ENCODE measurements at regions of chr10 and their contacts with region 1.

Region 1: GRCh38 chr10:90871766-90872647 is at the start of gene RPP30:
- DNase-seq: peak; percentile 82
- H3K4me3 Mint-ChIP-seq: peak within 1 kb of the TSS; percentile 97
- H3K27ac Mint-ChIP-seq: peak within 1 kb of the TSS; percentile 91
- H3K4me1 Mint-ChIP-seq: peaks cover 39% of the 10 kb centered on the region
- H3K27me3 Mint-ChIP-seq: peaks cover 29% of the 10 kb centered on the region
- total RNA-seq, gene RPP30: 78.3 and 80.4 TPM in 2 replicates

Region 2: DNA sequence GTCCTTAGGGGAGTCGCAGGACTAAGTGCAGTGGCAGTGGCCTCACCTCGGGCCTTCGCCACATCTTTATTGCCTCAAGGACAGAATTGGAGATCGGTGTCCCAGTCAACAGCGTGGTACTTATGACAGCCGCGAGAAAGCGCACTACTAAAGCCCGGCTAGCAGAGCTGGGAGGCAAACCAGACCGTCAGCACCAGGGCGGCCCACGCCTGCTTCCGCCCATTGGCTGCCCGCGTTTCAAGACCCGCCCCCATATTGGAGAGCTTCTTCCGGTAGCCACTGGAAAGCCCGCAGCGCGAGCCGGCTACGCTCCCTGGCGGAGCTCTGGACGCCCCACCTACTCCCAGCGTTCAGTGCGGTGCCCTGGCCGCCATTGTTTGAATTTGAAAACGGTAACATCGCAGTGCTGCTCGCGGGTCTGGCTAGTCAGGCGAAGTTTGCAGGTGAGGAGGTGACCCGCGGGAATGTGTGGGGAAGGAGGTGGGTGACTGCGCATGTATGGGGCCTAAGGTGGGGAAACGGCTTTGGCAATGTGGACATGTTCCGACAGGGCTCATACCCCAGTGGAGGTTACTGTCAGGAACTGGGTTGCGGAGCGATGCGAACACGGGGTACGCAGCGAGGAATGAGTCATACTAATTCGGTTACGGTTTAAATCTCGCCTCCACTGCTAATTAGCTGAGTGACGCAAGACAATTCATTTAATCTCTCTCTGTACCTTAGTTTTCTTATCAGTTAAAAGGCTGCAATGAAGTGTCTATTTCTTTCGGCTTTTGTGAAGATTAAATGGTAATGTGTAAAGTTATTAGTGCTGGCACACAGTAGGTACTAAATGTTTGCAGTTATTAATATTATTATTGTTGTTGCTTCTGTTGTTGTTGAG is 1170.5 kb before region 1 on chr10 and contains the start of gene KIF20B:
- intact Hi-C with region 1: loop called (anchors 2 kb)
- DNase-seq: peak; percentile 96
- H3K4me3 Mint-ChIP-seq: peak within 1 kb of the TSS; percentile 91
- H3K27ac Mint-ChIP-seq: peak within 1 kb of the TSS; percentile 95
- H3K4me1 Mint-ChIP-seq: peaks cover 63% of the 10 kb centered on the region
- H3K27me3 Mint-ChIP-seq: no peaks in the 10 kb centered on the region
- total RNA-seq, gene KIF20B: 48.7 TPM in 2 replicates

Region 3: GRCh38 chr10:90227217-90227656 is 644.8 kb before region 1 on chr10:
- intact Hi-C with region 1: loop called (anchors 5 kb)
- DNase-seq: no peak
- H3K4me3 Mint-ChIP-seq: no peak overlapping the region
- H3K27ac Mint-ChIP-seq: peak overlapping the region; percentile 63
- H3K4me1 Mint-ChIP-seq: peaks cover 6% of the 10 kb centered on the region
- H3K27me3 Mint-ChIP-seq: peaks cover 8% of the 10 kb centered on the region

Region 4: DNA sequence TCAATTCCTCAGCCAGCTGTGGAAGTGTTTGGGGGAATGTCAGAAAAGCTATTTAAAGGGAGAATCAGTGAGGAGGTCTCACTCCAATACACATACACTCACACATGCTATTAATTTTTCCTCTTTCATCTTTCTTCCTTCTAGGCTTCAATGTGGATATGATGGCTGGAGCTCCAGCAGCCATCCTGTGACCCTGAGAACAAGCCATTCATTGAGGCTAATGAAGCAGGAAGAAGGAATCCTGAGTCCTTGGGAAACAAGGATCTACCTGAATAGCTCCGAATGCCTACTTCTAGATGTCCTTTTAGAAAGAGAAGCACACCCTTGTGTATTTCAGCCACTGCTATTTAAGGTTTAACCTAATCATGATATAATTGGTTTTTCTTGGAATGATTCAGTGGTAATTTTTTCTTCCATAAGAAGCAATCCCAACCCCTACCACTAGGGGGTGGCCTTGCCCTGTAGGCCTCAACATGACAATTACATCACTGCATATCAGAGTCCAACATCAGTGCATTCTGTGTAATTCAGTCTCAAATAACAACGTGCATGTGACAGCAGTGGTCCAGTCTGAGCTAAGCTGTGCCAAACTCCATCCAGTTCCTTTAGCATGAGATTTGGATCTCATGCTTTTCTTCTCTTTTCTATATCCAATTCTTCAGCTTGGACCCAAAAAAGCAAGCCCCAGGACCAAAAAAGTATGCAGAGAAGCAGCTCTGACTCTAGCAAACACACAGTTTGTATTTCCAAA is 134.2 kb after region 1 on chr10:
- intact Hi-C with region 1: loop called (anchors 2 kb)
- DNase-seq: peak; percentile 41
- H3K4me3 Mint-ChIP-seq: peak overlapping the region; percentile 8
- H3K27ac Mint-ChIP-seq: peak overlapping the region; percentile 58
- H3K4me1 Mint-ChIP-seq: peaks cover 27% of the 10 kb centered on the region
- H3K27me3 Mint-ChIP-seq: peaks cover 28% of the 10 kb centered on the region

Region 5: DNA sequence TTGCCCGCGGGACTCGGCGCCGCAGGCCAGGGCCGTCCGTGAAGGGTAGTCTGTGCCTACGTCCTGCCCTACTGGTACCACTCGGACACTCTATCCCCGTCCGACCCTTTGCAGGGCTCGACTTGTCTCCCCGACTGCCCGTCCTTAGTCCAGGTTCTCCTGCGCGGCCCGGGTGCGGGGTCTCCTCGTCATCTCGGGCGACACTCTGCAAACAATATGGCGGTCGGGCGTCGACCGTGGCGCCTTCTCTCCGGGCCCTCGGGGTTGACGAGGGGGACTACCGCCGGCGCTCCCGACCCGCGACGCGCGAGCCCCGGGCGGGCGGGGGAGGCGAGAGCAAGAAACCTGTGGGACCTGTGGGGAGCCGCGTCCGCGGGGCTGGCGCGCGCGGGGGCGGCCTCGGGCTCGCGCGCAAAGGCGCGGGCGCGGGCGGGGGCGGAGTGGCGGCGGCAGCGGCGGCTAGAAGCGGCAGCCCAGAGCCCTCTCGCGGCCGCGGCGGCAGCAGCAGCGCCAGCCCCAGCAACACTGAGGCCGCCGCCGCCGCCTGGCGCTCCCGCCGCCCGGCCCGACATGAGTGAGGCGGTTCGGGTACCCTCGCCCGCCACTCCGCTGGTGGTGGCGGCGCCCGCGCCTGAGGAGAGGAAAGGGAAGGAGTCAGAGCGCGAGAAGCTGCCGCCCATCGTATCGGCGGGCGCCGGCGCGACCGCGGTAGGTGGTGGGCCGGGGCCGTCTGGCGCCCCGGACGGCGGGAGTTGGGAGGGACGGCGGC is 538.0 kb after region 1 on chr10 and contains the start of gene HECTD2:
- intact Hi-C with region 1: loop called (anchors 5 kb)
- DNase-seq: peak; percentile 75
- H3K4me3 Mint-ChIP-seq: peak within 1 kb of the TSS; percentile 91
- H3K27ac Mint-ChIP-seq: peak within 1 kb of the TSS; percentile 95
- H3K4me1 Mint-ChIP-seq: peaks cover 25% of the 10 kb centered on the region
- H3K27me3 Mint-ChIP-seq: peaks cover 11% of the 10 kb centered on the region
- total RNA-seq, gene HECTD2: 6.2 and 6.4 TPM in 2 replicates